ENCODE measurements at regions of chr14 and their contacts with region 1.

Region 1: DNA sequence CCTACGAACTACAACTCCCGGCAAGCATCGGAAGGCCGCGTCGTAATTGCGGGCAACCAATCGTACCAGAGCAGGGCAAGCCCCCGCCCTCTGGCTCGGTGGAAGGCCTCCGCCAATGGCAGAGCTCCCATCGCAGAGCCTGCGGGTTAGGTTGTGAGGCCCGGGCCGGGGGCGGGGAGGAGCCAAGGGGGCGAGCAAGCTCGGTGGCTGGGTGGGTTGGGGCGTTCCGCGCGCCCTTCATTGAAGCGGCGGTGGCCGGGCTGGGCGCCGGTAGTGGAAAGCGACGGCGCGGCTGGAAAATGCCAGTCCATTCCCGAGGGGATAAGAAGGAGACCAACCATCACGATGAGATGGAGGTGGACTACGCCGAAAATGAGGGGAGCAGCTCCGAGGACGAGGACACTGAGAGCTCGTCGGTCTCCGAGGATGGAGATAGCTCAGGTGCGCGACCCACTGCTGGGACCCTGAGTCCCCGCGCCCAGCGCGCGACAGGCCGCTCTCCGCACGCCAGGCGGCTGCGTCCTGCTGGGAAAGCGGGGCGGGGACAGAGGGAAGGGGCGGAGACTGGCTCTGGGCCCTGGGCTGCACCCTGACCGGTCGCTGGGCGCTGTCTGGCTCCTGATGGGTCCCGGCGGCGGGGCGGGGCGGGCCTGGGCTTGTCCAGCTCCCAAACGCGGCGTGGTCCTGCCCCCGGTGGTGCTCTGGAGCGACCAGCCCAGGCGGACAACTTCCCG is at the start of gene BRMS1L:
- DNase-seq: peak; percentile 99
- ATAC-seq: peak; percentile 97 to 98 (median 98)
- H3K4me3 ChIP-seq: peak within 1 kb of the TSS; percentile 99
- H3K27ac ChIP-seq: peak within 1 kb of the TSS; percentile 100
- H3K4me1 ChIP-seq: peaks cover 4% of the 10 kb centered on the region
- H3K27me3 ChIP-seq: no peaks in the 10 kb centered on the region
- CTCF ChIP-seq: peak; percentile 6
- total RNA-seq, gene BRMS1L: 8.3 to 14.2 (median 9.8) TPM

Region 2: DNA sequence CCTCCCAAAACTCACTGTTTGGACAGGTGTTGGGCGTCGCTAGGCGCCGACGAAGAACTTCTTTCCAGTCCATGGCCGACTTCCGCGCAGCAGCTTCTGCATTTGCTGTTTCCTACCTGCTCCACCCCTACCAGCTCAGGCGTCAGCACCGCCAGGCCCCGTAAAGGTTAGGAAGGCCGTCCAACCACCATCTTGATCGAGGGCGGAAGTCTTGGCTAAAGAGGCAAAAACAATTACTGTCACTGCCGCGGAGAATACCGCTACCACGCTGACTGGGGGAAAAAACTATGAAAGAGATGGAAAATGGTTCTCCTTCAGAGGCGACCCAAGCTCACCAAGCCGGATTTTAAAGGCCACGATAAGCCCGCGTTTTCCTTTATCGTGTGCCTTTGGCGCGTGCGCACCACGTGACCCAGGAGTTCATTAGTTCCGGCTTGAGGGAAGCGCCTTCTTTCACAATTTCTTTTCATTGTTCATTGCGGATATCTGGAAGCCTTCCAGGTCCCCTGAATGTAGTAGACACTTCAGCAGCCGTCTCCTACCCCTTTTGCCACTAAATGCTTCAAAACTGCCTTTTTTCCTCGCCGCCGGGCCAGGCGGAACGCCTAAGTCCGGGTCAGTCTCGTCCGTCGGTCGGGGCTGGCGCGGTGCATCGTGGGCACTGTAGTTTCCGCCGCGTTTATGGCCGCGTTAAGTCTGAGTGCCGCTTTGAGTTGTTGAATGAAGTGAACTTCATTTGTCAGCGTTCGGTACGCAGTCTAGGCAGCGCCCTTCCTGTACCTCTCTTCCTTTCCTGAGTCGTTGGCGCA is 704.3 kb before region 1 on chr14 and contains the starts of genes PPP2R3C and PRORP:
- intact Hi-C with region 1: loop called in 1 of 2 experiments (anchors 10 kb)
- DNase-seq: peak; percentile 88 to 96
- ATAC-seq: peak; percentile 93 to 95 (median 94)
- H3K4me3 ChIP-seq: peak within 1 kb of the TSS; percentile 82
- H3K27ac ChIP-seq: peak within 1 kb of the TSS; percentile 96
- H3K4me1 ChIP-seq: peaks cover 19% of the 10 kb centered on the region
- H3K27me3 ChIP-seq: no peaks in the 10 kb centered on the region
- CTCF ChIP-seq: no peak
- total RNA-seq, gene PPP2R3C: 22.9 to 37.1 (median 27.9) TPM
- total RNA-seq, gene PRORP: 15.1 to 23.0 (median 17.0) TPM